Caco-2 (cell line): ENCODE measurements at regions of chr2 and their contacts with region 1.

Region 1: DNA sequence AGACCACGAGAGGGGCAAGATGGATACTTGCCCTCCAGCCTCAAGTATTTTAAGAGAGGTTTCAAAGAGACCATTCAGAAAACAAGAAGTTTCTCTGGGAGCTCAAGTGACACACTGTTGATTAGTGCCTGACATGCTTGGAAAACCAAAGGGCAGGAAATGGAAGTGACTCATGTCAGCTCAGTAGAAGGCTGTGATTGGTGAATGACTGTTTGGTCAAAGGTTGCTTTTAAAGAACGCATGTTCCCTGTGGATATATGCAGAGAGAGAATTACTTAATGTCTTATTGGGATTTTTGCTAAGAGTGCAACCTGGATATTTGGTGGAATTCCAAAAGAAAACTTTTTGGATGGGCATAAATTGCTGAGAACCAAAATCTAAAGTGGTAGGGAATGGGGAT is 549.9 kb downstream of the XIRP2 start:
- DNase-seq: no peak
- H3K4me3 ChIP-seq: no peak overlapping the region
- H3K4me3 Mint-ChIP-seq: no peak overlapping the region
- H3K27ac Mint-ChIP-seq: no peak overlapping the region
- H3K4me1 ChIP-seq: no peaks in the 10 kb centered on the region
- H3K4me1 Mint-ChIP-seq: no peaks in the 10 kb centered on the region
- H3K27me3 ChIP-seq: no peaks in the 10 kb centered on the region
- H3K27me3 Mint-ChIP-seq: no peaks in the 10 kb centered on the region
- CTCF ChIP-seq: no peak

Region 2: DNA sequence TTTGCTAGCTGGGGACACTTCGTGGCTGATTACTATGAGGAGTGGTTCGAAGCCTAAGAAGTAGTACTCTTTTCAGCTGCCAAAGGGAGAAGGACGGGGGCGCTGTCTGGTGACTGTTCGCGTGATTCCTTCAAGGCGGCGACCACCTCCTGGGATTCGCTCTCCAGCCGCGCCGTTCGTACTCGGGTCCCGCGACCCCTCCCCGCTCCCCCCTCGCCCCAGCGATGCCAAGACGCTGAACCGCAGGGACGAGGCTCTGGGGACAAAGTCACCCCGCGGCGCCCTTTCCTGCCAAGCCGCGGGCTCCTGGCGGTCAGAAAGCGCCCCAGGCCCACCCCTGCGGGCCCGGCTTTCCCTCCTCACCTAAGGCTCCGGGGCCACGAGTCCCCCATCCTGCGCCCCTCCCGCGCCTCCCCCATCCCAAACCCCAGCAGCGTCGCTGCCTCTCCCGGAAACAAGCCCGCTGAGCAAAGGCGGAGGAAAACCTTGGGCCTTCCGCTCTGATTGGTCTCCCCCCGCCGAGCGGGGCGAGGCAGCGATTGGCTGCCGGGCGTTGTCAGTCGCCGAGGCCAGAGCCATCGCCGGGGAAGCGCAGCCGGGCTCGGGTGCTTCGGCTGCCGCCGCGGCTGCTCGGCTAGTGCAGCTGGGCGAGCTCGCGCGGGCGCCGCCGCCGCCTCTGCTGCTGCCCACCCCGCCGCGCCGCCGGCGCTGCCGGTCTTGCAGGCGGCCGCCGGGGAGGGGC is 145.6 kb before region 1 on chr2:
- CTCF ChIA-PET with region 1: no interaction called
- POLR2A ChIA-PET with region 1: no interaction called
- intact Hi-C with region 1: loop called (anchors 2 kb)
- DNase-seq: peak; percentile 82 to 88
- H3K4me3 ChIP-seq: peak within 1 kb of the TSS; percentile 66
- H3K4me3 Mint-ChIP-seq: peak within 1 kb of the TSS; percentile 76
- H3K27ac Mint-ChIP-seq: no peak within 1 kb of the TSS
- H3K4me1 ChIP-seq: peaks cover 5% of the 10 kb centered on the region; the same call in 1 of the 2 replicates
- H3K4me1 Mint-ChIP-seq: peaks cover 7% of the 10 kb centered on the region
- H3K27me3 ChIP-seq: peaks cover 1% of the 10 kb centered on the region; the same call in 1 of the 2 replicates
- H3K27me3 Mint-ChIP-seq: peaks cover 32% of the 10 kb centered on the region
- CTCF ChIP-seq: peak; percentile 47 to 52

Region 3: GRCh38 chr2:167420211-167420610 is 18.0 kb before region 1 on chr2:
- CTCF ChIA-PET with region 1: no interaction called
- POLR2A ChIA-PET with region 1: no interaction called
- intact Hi-C with region 1: no loop called
- DNase-seq: no peak
- H3K4me3 ChIP-seq: no peak overlapping the region
- H3K4me3 Mint-ChIP-seq: no peak overlapping the region
- H3K27ac Mint-ChIP-seq: no peak overlapping the region
- H3K4me1 ChIP-seq: no peaks in the 10 kb centered on the region; the same call in 1 of the 2 replicates
- H3K4me1 Mint-ChIP-seq: no peaks in the 10 kb centered on the region
- H3K27me3 ChIP-seq: no peaks in the 10 kb centered on the region
- H3K27me3 Mint-ChIP-seq: peaks cover 3% of the 10 kb centered on the region
- CTCF ChIP-seq: no peak

Region 4: GRCh38 chr2:167509586-167509985 is 71.4 kb after region 1 on chr2:
- CTCF ChIA-PET with region 1: no interaction called
- POLR2A ChIA-PET with region 1: no interaction called
- intact Hi-C with region 1: no loop called
- DNase-seq: peak in 1 of 2 experiments; percentile 5
- H3K4me3 ChIP-seq: no peak overlapping the region
- H3K4me3 Mint-ChIP-seq: peak overlapping the region; percentile 38
- H3K27ac Mint-ChIP-seq: peak overlapping the region; percentile 22
- H3K4me1 ChIP-seq: peaks cover 18% of the 10 kb centered on the region
- H3K4me1 Mint-ChIP-seq: peaks cover 20% of the 10 kb centered on the region
- H3K27me3 ChIP-seq: no peaks in the 10 kb centered on the region
- H3K27me3 Mint-ChIP-seq: no peaks in the 10 kb centered on the region
- CTCF ChIP-seq: no peak